ENCODE measurements at regions of chr3 and their contacts with region 1.

Region 1: GRCh38 chr3:187274977-187275338 is 16.6 kb downstream of the MASP1 start:
- DNase-seq: no peak

Region 2: GRCh38 chr3:186225603-186226002 is 1049.4 kb before region 1 on chr3:
- intact Hi-C with region 1: loop called in 1 of 2 experiments (anchors 5 kb)
- DNase-seq: no peak

Region 3: GRCh38 chr3:187334904-187335303 is 59.9 kb after region 1 on chr3:
- intact Hi-C with region 1: loop called in 1 of 2 experiments (anchors 2 kb)
- DNase-seq: no peak

Measured in posterior vena cava (tissue), 2 donors.